Naive thymus-derived CD4-positive, alpha-beta T cell (primary cell): ENCODE measurements at regions of chr9 and their contacts with region 1.

Region 1: GRCh38 chr9:74379718-74380117 is 117.4 kb upstream of the RORB start:
- DNase-seq: no peak
- ATAC-seq: no peak
- H3K4me3 ChIP-seq: no peak overlapping the region
- H3K4me3 Mint-ChIP-seq: no peak overlapping the region
- H3K27ac ChIP-seq: no peak overlapping the region
- H3K27ac Mint-ChIP-seq: peak overlapping the region in 1 of 9 donors; percentile 81
- H3K4me1 ChIP-seq: no peaks in the 10 kb centered on the region
- H3K4me1 Mint-ChIP-seq: peaks cover 0 to 9% (median 0%) of the 10 kb centered on the region in 7 donors
- H3K27me3 ChIP-seq: no peaks in the 10 kb centered on the region
- H3K27me3 Mint-ChIP-seq: no peaks in the 10 kb centered on the region

Region 2: DNA sequence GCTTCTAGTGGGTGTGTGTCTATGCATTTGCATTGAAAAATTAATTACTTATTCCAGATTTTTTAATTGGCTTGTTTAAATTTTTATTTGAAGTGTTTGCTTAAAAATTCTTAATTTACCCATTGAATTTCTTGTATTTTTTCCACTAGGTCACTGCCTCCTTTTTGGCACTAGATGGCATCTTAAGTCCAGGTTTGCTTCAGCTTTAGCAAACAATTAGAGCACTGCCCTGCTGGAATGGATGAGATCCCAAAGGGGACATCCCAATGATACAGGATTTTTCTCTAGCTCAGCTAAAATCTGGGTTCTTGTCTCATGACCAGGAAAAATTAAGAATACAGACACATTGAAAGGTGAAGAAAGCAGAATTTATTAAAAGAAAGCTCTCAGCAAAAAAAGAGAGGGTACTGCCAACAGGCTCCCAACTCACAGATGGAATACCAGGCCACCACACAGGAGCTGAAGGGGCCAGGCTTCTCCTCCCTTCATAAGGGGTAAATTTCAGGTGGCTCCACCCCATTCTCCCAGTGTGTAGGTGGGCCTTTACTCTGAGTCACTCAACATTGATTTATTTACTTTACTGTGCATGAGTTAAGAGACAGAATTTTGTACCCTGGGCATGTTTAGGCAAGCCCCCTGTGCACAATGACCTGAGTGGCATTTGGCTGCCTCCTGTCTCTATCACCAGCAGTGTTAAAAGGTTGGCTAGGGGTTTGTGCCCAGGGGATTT is 695.7 kb before region 1 on chr9:
- CTCF ChIA-PET with region 1: no interaction called
- POLR2A ChIA-PET with region 1: no interaction called
- intact Hi-C with region 1: loop called in 1 of 2 experiments (anchors 1 kb)
- DNase-seq: no peak
- ATAC-seq: no peak
- H3K4me3 ChIP-seq: no peak overlapping the region
- H3K4me3 Mint-ChIP-seq: no peak overlapping the region
- H3K27ac ChIP-seq: no peak overlapping the region
- H3K27ac Mint-ChIP-seq: no peak overlapping the region
- H3K4me1 ChIP-seq: no peaks in the 10 kb centered on the region
- H3K4me1 Mint-ChIP-seq: no peaks in the 10 kb centered on the region
- H3K27me3 ChIP-seq: no peaks in the 10 kb centered on the region
- H3K27me3 Mint-ChIP-seq: no peaks in the 10 kb centered on the region

Region 3: DNA sequence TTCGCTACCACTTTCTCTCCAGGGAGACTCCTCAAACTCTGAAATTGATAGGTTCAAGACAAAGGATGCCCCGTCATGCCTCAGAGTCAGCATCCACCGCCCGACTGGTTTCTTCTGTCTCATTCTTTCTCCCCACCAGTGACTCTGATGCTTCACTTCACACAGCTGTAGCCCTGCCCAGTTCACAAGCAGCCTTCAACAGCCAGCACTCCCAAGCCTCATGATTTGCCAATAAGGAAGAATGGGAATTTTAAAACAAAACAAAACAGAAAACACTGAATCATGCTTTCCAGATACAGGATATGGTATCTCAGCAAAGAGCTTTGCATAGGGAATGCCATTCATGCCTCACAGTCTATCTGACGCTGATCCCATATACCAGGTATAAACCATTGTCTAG is 253.8 kb before region 1 on chr9:
- CTCF ChIA-PET with region 1: no interaction called
- POLR2A ChIA-PET with region 1: no interaction called
- intact Hi-C with region 1: loop called in 1 of 2 experiments (anchors 10 kb)
- DNase-seq: no peak
- ATAC-seq: no peak
- H3K4me3 ChIP-seq: no peak overlapping the region
- H3K4me3 Mint-ChIP-seq: no peak overlapping the region
- H3K27ac ChIP-seq: no peak overlapping the region
- H3K27ac Mint-ChIP-seq: no peak overlapping the region
- H3K4me1 ChIP-seq: no peaks in the 10 kb centered on the region
- H3K4me1 Mint-ChIP-seq: peaks cover 0 to 8% (median 0%) of the 10 kb centered on the region in 7 donors
- H3K27me3 ChIP-seq: no peaks in the 10 kb centered on the region
- H3K27me3 Mint-ChIP-seq: no peaks in the 10 kb centered on the region

Region 4: GRCh38 chr9:74309654-74310053 is 70.1 kb before region 1 on chr9:
- CTCF ChIA-PET with region 1: no interaction called
- POLR2A ChIA-PET with region 1: no interaction called
- intact Hi-C with region 1: loop called in 1 of 2 experiments (anchors 1 kb)
- DNase-seq: no peak
- ATAC-seq: no peak
- H3K4me3 ChIP-seq: no peak overlapping the region
- H3K4me3 Mint-ChIP-seq: no peak overlapping the region
- H3K27ac ChIP-seq: no peak overlapping the region
- H3K27ac Mint-ChIP-seq: no peak overlapping the region
- H3K4me1 ChIP-seq: no peaks in the 10 kb centered on the region
- H3K4me1 Mint-ChIP-seq: no peaks in the 10 kb centered on the region
- H3K27me3 ChIP-seq: no peaks in the 10 kb centered on the region
- H3K27me3 Mint-ChIP-seq: no peaks in the 10 kb centered on the region

Region 5: DNA sequence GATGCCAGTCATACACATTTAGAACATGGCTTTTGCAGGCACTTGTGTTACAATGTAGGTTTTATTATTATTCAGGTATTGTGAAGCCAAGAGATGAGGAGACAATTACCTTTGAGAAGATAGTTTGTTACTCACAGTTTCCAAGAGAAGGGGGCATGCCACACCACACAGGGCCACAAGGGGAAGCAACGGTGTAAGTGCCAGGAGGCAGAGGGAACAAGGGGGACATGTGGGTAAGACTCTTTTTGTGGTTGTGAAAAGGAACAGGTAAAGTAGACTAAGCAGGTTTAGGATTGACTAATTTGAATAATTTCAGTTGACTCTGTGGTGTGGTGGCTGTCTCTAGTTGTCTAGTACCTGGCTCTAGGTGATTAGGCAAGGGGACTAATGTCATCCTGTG is 316.8 kb after region 1 on chr9:
- CTCF ChIA-PET with region 1: no interaction called
- POLR2A ChIA-PET with region 1: no interaction called
- intact Hi-C with region 1: no loop called
- DNase-seq: no peak
- ATAC-seq: no peak
- H3K4me3 ChIP-seq: no peak overlapping the region
- H3K4me3 Mint-ChIP-seq: no peak overlapping the region
- H3K27ac ChIP-seq: no peak overlapping the region
- H3K27ac Mint-ChIP-seq: no peak overlapping the region
- H3K4me1 ChIP-seq: no peaks in the 10 kb centered on the region
- H3K4me1 Mint-ChIP-seq: peaks cover 0 to 2% (median 0%) of the 10 kb centered on the region in 7 donors
- H3K27me3 ChIP-seq: no peaks in the 10 kb centered on the region
- H3K27me3 Mint-ChIP-seq: peaks cover 10 to 46% (median 26%) of the 10 kb centered on the region in 5 donors